ENCODE measurements at regions of chr2 and their contacts with region 1.

Region 1: GRCh38 chr2:111155610-111156009 is 34.9 kb downstream of the BCL2L11 start:
- DNase-seq: no peak
- H3K4me3 Mint-ChIP-seq: no peak overlapping the region
- H3K27ac Mint-ChIP-seq: no peak overlapping the region
- H3K4me1 Mint-ChIP-seq: peaks cover 37% of the 10 kb centered on the region
- H3K27me3 Mint-ChIP-seq: no peaks in the 10 kb centered on the region

Region 2: DNA sequence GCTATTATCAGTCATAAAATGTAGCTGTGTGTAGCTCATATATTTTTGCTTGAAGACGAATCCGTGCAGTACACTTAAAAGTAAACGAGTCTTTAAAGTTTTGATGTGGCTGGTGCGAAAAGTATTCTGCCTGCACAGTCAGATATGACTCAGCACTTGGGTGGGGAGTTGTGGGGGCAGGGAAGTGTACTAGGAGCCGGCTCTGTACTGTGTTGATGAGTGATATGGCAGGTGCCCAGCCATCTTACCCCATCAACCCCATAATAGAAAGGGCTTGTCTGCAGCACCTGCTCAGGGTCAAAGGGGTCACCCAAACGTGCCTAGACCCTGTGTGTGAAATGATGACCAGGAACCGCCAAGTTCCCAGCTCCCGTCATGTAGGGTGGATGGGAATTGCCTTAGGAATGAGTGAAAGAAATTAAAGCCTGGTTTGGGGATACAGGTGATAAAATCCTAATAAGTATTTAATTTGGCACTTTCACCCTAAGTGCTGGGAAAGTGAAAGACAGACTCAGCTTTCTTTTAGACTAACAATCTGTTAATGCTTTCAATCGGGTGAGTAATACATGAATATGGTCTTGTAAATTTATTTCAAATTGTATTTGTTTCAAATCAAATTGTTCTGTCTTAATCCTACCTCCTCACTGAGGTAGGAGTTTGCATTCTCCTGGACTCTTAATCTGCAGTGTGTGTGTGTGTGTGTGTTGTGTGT is 13.1 kb after region 1 on chr2:
- CTCF ChIA-PET with region 1: no interaction called
- intact Hi-C with region 1: loop called (anchors 2 kb)
- DNase-seq: peak; percentile 84
- H3K4me3 Mint-ChIP-seq: no peak overlapping the region
- H3K27ac Mint-ChIP-seq: no peak overlapping the region
- H3K4me1 Mint-ChIP-seq: peaks cover 22% of the 10 kb centered on the region
- H3K27me3 Mint-ChIP-seq: peaks cover 23% of the 10 kb centered on the region